GM10248 (cell line): ENCODE measurements at regions of chr1 and their contacts with region 1.

Region 1: DNA sequence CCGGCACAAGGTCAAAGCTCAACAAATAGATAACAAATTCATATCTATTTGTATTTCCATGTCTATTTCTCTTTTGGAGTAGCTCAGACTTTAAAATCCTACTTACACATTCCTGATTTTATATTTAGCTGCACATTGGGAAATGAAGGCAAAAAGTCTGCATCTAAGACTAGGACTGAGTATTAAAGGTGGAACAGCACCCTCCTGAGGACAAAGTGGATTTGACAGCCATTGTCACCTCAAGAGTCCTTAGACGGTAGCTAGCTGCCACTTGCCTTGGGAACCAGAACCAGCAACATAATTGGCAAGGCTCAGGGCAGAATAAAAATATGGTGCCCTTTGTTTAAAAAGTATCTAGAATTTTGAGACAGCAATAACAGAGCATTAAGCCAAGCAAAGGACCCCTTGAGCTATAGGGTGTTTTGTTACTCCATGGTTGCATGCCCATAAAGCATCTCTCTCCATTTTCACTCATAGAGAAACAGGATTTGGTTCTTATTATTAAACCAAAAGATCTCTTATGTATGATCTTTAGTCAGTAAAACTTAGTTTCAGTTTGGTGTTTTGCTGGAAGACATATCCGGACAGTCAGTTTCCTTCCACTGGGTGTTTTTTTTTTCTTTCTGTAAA is 30.0 kb upstream of the SGIP1 start:
- DNase-seq: peak; percentile 18
- CTCF ChIP-seq: peak; percentile 69

Region 2: DNA sequence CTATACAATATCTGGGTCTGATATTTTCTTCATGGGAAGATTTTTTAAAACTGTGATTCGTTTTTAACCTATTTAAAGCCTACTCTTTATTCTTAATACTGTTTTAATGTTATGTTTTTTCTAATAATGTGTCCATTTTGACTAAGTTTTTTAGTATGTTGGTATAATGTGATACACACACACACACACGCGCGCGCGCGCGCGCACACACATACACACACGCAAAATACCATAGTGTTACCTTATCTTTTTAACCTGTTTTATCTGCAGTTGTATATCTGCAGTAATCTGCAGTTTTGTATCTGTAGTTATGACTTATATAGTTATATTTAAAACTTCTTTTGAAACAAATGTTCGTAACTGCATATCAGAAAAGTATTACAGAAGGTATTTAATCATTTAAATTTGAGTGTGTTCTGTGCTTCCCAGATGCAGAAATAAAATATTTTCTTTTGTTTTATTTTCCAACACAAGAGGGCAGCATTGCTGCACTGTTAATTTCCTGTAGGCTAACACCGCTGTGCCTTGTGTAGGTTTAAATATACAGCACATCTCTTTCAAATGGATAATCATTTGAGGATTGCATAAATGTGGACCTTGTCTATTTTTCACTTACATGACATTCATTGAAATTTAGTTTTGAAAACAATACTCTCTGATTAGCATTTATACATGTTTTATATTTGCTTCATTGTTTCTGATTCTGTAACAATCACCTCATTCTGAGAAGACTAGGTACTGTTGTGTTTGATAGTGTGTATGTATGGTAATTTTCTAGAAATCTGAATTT is 545.2 kb before region 1 on chr1:
- CTCF ChIA-PET with region 1: interaction called, 34 read pairs
- POLR2A ChIA-PET with region 1: no interaction called
- DNase-seq: peak; percentile 33
- CTCF ChIP-seq: peak; percentile 40

Region 3: GRCh38 chr1:66490816-66491215 is 13.1 kb before region 1 on chr1:
- CTCF ChIA-PET with region 1: interaction called, 16 read pairs
- POLR2A ChIA-PET with region 1: no interaction called
- DNase-seq: no peak
- CTCF ChIP-seq: no peak

Region 4: DNA sequence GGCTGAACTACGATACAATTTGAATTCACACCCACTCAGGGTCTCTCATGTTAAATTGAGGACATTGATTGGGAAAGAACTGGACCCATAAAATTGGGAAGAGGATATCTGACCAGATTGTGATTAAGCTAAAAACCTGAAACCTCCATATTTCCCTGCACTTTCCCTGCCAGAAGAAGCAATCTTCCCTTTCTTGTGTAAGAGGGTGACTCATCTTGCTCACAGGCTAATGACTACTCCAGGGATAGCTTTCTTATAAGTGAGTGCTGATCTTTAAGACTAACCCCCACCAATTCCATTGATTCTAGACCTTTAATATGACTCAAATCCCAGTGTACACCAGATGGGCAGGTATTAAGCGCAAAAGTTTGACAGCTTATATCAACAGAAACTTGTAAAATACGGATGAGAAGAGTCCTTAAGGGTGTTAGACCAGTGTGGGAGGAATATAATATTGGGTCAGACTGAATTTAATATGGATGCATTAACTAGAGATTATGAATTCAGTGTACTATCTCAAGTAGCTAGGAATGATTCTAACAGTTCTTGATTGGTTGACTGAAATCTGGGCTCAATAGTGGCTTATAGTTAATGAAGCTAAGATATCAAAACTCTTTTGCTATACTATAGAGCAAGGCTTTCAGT is 17.9 kb after region 1 on chr1:
- CTCF ChIA-PET with region 1: interaction called, 10 read pairs
- POLR2A ChIA-PET with region 1: no interaction called
- DNase-seq: no peak
- CTCF ChIP-seq: no peak

Region 5: GRCh38 chr1:66570196-66570595 is 66.2 kb after region 1 on chr1:
- CTCF ChIA-PET with region 1: no interaction called
- POLR2A ChIA-PET with region 1: no interaction called
- DNase-seq: no peak
- CTCF ChIP-seq: no peak